MCF 10A (cell line): ENCODE measurements at regions of chr2 and their contacts with region 1.

Region 1: GRCh38 chr2:209029249-209029648 is 394.6 kb upstream of the MAP2 start:
- DNase-seq: no peak
- H3K4me3 Mint-ChIP-seq: no peak overlapping the region
- H3K27ac Mint-ChIP-seq: no peak overlapping the region
- H3K4me1 Mint-ChIP-seq: no peaks in the 10 kb centered on the region
- H3K27me3 Mint-ChIP-seq: no peaks in the 10 kb centered on the region
- CTCF ChIP-seq: no peak

Region 2: DNA sequence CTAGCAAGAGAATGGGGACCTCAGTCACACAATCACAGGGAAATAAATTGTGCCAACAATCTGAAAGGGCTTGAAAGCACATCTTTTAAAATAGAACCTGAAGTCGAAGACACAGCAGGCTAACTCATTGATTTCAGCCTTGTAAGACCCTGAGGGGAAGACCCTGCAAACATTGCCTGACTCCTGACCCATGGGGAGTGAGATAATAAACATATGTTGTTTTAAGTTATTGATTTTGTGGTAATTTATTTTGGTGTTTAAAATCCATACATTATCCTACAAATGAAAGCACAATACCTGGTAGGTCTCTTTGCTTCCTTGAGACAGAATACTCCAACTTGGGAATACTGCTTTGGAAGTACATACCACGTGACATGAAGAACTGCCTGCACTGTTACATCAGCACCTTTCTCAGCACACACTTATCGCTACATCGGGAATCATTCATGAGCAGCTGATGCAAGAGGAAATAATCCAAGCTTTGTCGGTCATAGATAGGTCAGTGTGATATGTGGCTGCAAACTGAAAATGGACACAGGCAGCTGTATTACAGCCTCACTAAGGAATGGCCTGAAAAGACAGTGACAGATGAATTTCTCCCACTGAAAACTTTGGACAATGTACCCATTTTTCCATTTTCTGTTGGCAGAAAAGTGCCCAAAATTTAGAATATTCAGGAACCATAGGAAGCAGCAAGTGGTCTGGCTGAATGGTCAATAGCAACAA is 99.9 kb before region 1 on chr2:
- CTCF ChIA-PET with region 1: no interaction called
- POLR2A ChIA-PET with region 1: no interaction called
- intact Hi-C with region 1: no loop called
- DNase-seq: no peak
- H3K4me3 Mint-ChIP-seq: no peak overlapping the region
- H3K27ac Mint-ChIP-seq: no peak overlapping the region
- H3K4me1 Mint-ChIP-seq: no peaks in the 10 kb centered on the region
- H3K27me3 Mint-ChIP-seq: no peaks in the 10 kb centered on the region
- CTCF ChIP-seq: no peak

Region 3: GRCh38 chr2:209016207-209016606 is 13.0 kb before region 1 on chr2:
- CTCF ChIA-PET with region 1: interaction called, 4 read pairs
- POLR2A ChIA-PET with region 1: no interaction called
- intact Hi-C with region 1: loop called (anchors 2 kb)
- DNase-seq: no peak
- H3K4me3 Mint-ChIP-seq: no peak overlapping the region
- H3K27ac Mint-ChIP-seq: no peak overlapping the region
- H3K4me1 Mint-ChIP-seq: no peaks in the 10 kb centered on the region
- H3K27me3 Mint-ChIP-seq: no peaks in the 10 kb centered on the region
- CTCF ChIP-seq: no peak